Activated CD4-positive, alpha-beta memory T cell treated with anti-CD3 and anti-CD28 coated beads, Interleukin-2, amount 10 ng/mL, durations not matched to agents 7 days and 5 days (primary cell): ENCODE measurements at regions of chr17 and their contacts with region 1.

Region 1: DNA sequence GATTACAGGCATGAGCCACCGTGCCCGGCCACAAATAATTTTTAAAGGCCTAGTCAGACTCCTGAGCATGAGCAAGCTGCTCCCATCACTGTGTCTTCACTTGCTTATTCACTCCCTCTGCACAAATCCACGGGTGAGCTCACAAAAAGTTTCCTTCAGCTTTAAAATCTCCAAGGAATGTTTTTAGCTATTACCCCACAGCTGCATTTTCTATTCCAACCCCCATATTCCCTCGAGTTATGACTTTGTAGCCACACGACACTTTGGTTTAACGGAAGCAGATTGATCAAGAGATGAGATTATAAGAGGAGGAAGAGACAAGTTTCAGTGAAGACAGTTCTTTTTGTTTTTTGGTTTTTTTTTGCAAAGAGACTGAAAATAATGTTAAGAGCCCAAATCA is 49.1 kb upstream of the SLC25A19 start:
- DNase-seq: no peak
- H3K4me3 Mint-ChIP-seq: peak overlapping the region; percentile 38
- H3K27ac Mint-ChIP-seq: peak overlapping the region; percentile 80
- H3K4me1 Mint-ChIP-seq: peaks cover 57% of the 10 kb centered on the region
- H3K27me3 Mint-ChIP-seq: no peaks in the 10 kb centered on the region

Region 2: GRCh38 chr17:75393523-75394331 is 55.4 kb after region 1 on chr17:
- CTCF ChIA-PET with region 1: interaction called, 4 read pairs
- POLR2A ChIA-PET with region 1: interaction called, 11 read pairs
- DNase-seq: peak; percentile 86
- H3K4me3 Mint-ChIP-seq: peak overlapping the region; percentile 90
- H3K27ac Mint-ChIP-seq: peak overlapping the region; percentile 59
- H3K4me1 Mint-ChIP-seq: peaks cover 72% of the 10 kb centered on the region
- H3K27me3 Mint-ChIP-seq: no peaks in the 10 kb centered on the region

Region 3: GRCh38 chr17:75463603-75464002 is 125.3 kb after region 1 on chr17:
- CTCF ChIA-PET with region 1: no interaction called
- POLR2A ChIA-PET with region 1: no interaction called
- DNase-seq: no peak
- H3K4me3 Mint-ChIP-seq: no peak overlapping the region
- H3K27ac Mint-ChIP-seq: no peak overlapping the region
- H3K4me1 Mint-ChIP-seq: peaks cover 10% of the 10 kb centered on the region
- H3K27me3 Mint-ChIP-seq: no peaks in the 10 kb centered on the region

Region 4: GRCh38 chr17:75476271-75476671 is 137.9 kb after region 1 on chr17:
- CTCF ChIA-PET with region 1: no interaction called
- POLR2A ChIA-PET with region 1: no interaction called
- DNase-seq: no peak
- H3K4me3 Mint-ChIP-seq: no peak overlapping the region
- H3K27ac Mint-ChIP-seq: no peak overlapping the region
- H3K4me1 Mint-ChIP-seq: no peaks in the 10 kb centered on the region
- H3K27me3 Mint-ChIP-seq: no peaks in the 10 kb centered on the region